MCF 10A (cell line): ENCODE measurements at regions of chr6 and their contacts with region 1.

Region 1: GRCh38 chr6:105363100-105363754 is 39.7 kb downstream of the PREP start:
- DNase-seq: peak; percentile 51
- H3K4me3 Mint-ChIP-seq: no peak overlapping the region
- H3K27ac Mint-ChIP-seq: peak overlapping the region; percentile 78
- H3K4me1 Mint-ChIP-seq: peaks cover 42% of the 10 kb centered on the region
- H3K27me3 Mint-ChIP-seq: no peaks in the 10 kb centered on the region
- CTCF ChIP-seq: peak; percentile 36

Region 2: DNA sequence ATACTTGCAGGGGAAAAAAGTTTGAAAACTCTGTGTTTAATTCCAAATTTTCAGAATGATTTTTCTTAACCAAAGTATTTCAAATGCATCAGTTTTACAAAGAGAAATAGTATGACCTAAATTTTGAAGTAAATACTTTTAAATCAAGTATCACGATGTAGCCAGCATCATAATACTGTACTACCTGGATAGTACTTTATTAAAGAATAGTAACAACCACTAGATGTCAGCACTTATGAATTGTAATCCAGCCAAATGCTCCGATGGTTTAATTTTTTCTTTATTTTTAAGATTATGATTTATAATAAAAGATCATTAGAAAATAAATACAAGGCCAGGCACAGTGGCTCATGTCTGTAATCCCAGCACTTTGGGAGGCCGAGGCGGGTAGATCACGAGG is 466.3 kb before region 1 on chr6:
- CTCF ChIA-PET with region 1: no interaction called
- POLR2A ChIA-PET with region 1: no interaction called
- intact Hi-C with region 1: no loop called
- DNase-seq: no peak
- H3K4me3 Mint-ChIP-seq: no peak overlapping the region
- H3K27ac Mint-ChIP-seq: no peak overlapping the region
- H3K4me1 Mint-ChIP-seq: no peaks in the 10 kb centered on the region
- H3K27me3 Mint-ChIP-seq: peaks cover 17% of the 10 kb centered on the region
- CTCF ChIP-seq: peak; percentile 31

Region 3: DNA sequence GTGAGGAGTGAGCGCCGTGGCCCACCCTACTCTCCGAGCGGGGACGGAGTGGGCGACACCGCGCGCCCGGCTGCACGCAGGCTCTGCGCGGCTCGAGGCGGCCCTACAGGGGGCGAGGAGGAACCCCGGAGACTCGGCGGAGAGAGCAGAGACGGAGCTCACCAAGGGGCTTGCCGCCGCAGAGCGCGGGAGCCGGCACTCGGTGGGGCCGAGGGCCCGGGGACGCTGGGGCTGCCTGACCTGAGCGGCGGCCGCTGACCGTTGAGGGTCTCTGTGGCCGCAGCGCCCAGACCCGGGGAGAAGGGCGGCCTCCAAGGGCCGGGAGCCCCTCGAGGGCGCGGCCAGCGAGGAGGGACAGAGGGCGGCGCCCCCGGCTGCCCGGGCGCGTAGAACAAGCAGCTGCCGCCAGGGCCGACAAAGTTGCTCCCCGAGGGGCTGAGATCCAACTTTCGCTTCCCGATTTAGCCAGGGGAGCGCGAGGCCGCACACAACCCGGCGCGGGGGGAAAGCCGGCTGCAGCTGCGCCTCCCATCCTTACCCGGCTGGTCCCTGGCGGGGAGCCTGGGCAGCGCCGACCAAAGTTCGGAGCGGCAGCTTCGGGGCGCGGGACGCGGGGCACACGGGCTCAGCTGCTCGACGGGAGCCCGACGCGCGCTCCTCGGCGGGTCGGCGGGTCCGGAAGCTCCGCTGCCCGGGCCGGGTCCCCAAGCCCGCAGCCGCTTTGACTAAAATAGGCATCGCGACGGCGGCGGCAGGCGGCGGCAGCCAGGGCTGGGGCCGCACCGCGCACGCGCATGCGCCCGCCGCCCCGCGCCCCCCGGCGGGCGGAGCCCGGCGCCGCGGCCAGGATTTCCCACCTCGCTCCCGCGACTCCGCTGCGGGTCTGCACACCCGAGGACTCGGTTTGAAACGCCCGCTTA is 226.5 kb before region 1 on chr6:
- CTCF ChIA-PET with region 1: no interaction called
- POLR2A ChIA-PET with region 1: interaction called, 3 read pairs
- intact Hi-C with region 1: loop called (anchors 5 kb)
- DNase-seq: peak; percentile 32
- H3K4me3 Mint-ChIP-seq: peak overlapping the region; percentile 68
- H3K27ac Mint-ChIP-seq: no peak overlapping the region
- H3K4me1 Mint-ChIP-seq: no peaks in the 10 kb centered on the region
- H3K27me3 Mint-ChIP-seq: peaks cover 6% of the 10 kb centered on the region
- CTCF ChIP-seq: peak; percentile 15

Region 4: GRCh38 chr6:105326833-105327770 is 36.1 kb before region 1 on chr6:
- CTCF ChIA-PET with region 1: interaction called, 18 read pairs
- POLR2A ChIA-PET with region 1: interaction called, 8 read pairs
- intact Hi-C with region 1: no loop called
- DNase-seq: peak; percentile 77
- H3K4me3 Mint-ChIP-seq: no peak overlapping the region
- H3K27ac Mint-ChIP-seq: peak overlapping the region; percentile 58
- H3K4me1 Mint-ChIP-seq: peaks cover 30% of the 10 kb centered on the region
- H3K27me3 Mint-ChIP-seq: no peaks in the 10 kb centered on the region
- CTCF ChIP-seq: no peak

Region 5: GRCh38 chr6:105346052-105346451 is 17.2 kb before region 1 on chr6:
- CTCF ChIA-PET with region 1: interaction called, 14 read pairs
- POLR2A ChIA-PET with region 1: interaction called, 16 read pairs
- intact Hi-C with region 1: no loop called
- DNase-seq: peak; percentile 56
- H3K4me3 Mint-ChIP-seq: no peak overlapping the region
- H3K27ac Mint-ChIP-seq: peak overlapping the region; percentile 67
- H3K4me1 Mint-ChIP-seq: peaks cover 11% of the 10 kb centered on the region
- H3K27me3 Mint-ChIP-seq: no peaks in the 10 kb centered on the region
- CTCF ChIP-seq: no peak

Region 6: GRCh38 chr6:105402939-105403935 is 40.0 kb after region 1 on chr6 and contains the start of gene PREP:
- CTCF ChIA-PET with region 1: interaction called, 22 read pairs
- POLR2A ChIA-PET with region 1: interaction called, 72 read pairs
- intact Hi-C with region 1: loop called (anchors 1 kb)
- DNase-seq: peak; percentile 85
- H3K4me3 Mint-ChIP-seq: peak within 1 kb of the TSS; percentile 82
- H3K27ac Mint-ChIP-seq: peak within 1 kb of the TSS; percentile 65
- H3K4me1 Mint-ChIP-seq: peaks cover 28% of the 10 kb centered on the region
- H3K27me3 Mint-ChIP-seq: no peaks in the 10 kb centered on the region
- CTCF ChIP-seq: peak; percentile 60
- total RNA-seq, gene PREP: 57.8 and 67.6 TPM in 2 replicates

Region 7: DNA sequence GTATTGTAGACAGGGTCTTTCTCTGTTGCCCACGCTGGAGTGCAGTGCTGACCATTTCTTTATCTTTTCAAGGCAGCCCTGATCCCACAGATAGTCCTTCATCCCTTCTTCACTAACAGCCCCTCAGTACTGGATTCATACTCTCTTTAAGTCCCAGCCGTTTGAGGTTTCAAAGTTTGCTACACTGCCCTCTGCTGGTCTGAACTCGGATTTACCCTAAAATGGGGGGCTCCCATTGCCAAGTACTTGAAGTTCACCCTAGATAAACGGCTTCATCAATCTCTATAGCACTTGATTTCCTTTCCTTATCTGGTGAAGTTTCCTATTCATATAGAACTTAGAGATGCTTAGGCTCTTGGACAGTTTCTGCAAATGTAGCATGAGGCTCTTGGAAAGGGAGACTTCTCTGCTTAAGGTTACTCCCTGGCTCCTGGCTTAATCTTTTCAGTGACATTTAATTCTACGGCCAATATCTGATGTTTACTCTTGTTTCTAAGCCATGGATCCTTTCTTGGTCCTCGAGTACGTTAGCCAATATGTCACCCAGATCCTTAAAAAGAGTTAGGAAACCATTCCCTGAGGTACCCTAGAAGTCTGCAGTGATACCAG is 61.1 kb after region 1 on chr6:
- CTCF ChIA-PET with region 1: interaction called, 10 read pairs
- POLR2A ChIA-PET with region 1: no interaction called
- intact Hi-C with region 1: no loop called
- DNase-seq: peak; percentile 68
- H3K4me3 Mint-ChIP-seq: no peak overlapping the region
- H3K27ac Mint-ChIP-seq: no peak overlapping the region
- H3K4me1 Mint-ChIP-seq: peaks cover 24% of the 10 kb centered on the region
- H3K27me3 Mint-ChIP-seq: no peaks in the 10 kb centered on the region
- CTCF ChIP-seq: peak; percentile 47